ENCODE measurements at regions of chr14 and their contacts with region 1.

Region 1: GRCh38 chr14:24215495-24216344 is at the start of gene MDP1:
- DNase-seq: peak; percentile 66 to 74
- H3K4me3 ChIP-seq: peak within 1 kb of the TSS; percentile 73
- H3K27ac ChIP-seq: peak within 1 kb of the TSS; percentile 36; the same call in 1 of the 2 replicates
- H3K4me1 ChIP-seq: peaks cover 10% of the 10 kb centered on the region; the same call in 1 of the 2 replicates
- H3K27me3 ChIP-seq: no peaks in the 10 kb centered on the region
- CTCF ChIP-seq: no peak
- total RNA-seq, gene MDP1: 8.7 and 15.3 TPM in 2 replicates

Region 2: DNA sequence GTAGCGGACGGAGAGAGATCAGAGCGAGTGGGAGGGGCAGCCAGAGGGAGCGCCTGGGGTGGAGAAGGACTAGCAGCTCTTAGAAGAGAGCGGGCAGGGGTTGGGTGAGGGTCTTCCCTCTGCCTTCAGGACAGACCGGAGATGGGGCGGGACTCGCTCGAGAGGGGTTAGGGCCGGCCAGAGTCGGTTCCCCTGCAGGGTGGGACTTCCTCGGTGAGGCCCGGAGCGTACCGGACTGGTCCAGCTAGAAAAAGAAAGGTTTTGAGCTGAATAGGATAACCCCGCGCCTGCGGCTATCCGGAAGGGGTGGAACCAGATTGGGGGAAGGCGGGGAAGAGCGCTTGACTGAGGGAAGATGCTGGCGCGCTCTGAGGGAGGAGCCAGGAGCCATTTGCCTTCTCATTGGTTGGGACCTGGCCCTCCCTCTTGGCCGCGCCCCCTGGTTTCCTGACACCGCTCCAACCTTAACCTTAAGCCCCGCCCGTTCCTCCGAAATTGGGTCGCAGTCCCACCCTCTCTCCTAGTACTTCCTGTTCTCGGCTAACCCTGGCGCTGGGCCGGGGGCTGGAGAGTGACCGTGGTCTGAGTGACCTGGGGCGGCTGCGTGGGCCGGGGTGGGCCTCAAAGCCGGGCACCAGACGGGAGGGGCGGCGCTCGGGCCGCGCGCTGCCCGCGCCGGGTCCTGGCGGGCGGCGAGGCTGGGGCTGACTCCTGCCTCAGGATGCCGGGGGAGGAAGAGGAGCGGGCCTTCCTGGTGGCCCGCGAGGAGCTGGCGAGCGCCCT is 68.6 kb before region 1 on chr14 and contains the start of gene RNF31:
- CTCF ChIA-PET with region 1: no interaction called
- POLR2A ChIA-PET with region 1: no interaction called
- intact Hi-C with region 1: loop called (anchors 2 kb)
- DNase-seq: peak; percentile 90 to 94
- H3K4me3 ChIP-seq: peak within 1 kb of the TSS; percentile 63
- H3K27ac ChIP-seq: peak within 1 kb of the TSS; percentile 29; the same call in 1 of the 2 replicates
- H3K4me1 ChIP-seq: peaks cover 15% of the 10 kb centered on the region
- H3K27me3 ChIP-seq: no peaks in the 10 kb centered on the region
- CTCF ChIP-seq: no peak
- total RNA-seq, gene RNF31: 44.6 and 60.8 TPM in 2 replicates

Region 3: GRCh38 chr14:24195191-24196070 is 20.3 kb before region 1 on chr14 and contains the start of gene TM9SF1:
- CTCF ChIA-PET with region 1: no interaction called
- POLR2A ChIA-PET with region 1: interaction called, 10 read pairs
- intact Hi-C with region 1: loop called (anchors 2 kb)
- DNase-seq: peak; percentile 49 to 72
- H3K4me3 ChIP-seq: peak within 1 kb of the TSS; percentile 71
- H3K27ac ChIP-seq: peak within 1 kb of the TSS; percentile 80
- H3K4me1 ChIP-seq: 0 out of 2 replicates have a peak, but pooled peaks cover 7% of the 10 kb centered on the region
- H3K27me3 ChIP-seq: no peaks in the 10 kb centered on the region
- CTCF ChIP-seq: no peak
- total RNA-seq, gene TM9SF1: 37.3 and 41.2 TPM in 2 replicates

Region 4: GRCh38 chr14:24299255-24300195 is 83.8 kb after region 1 on chr14 and contains the starts of genes DHRS1 and NOP9:
- CTCF ChIA-PET with region 1: interaction called, 10 read pairs
- POLR2A ChIA-PET with region 1: interaction called, 3 read pairs
- intact Hi-C with region 1: no loop called
- DNase-seq: peak; percentile 68 to 86
- H3K4me3 ChIP-seq: peak within 1 kb of the TSS; percentile 88
- H3K27ac ChIP-seq: peak within 1 kb of the TSS; percentile 53
- H3K4me1 ChIP-seq: peaks cover 16% of the 10 kb centered on the region
- H3K27me3 ChIP-seq: no peaks in the 10 kb centered on the region
- CTCF ChIP-seq: no peak
- total RNA-seq, gene DHRS1: 37.9 and 41.4 TPM in 2 replicates
- total RNA-seq, gene NOP9: 24.4 and 31.1 TPM in 2 replicates

Region 5: DNA sequence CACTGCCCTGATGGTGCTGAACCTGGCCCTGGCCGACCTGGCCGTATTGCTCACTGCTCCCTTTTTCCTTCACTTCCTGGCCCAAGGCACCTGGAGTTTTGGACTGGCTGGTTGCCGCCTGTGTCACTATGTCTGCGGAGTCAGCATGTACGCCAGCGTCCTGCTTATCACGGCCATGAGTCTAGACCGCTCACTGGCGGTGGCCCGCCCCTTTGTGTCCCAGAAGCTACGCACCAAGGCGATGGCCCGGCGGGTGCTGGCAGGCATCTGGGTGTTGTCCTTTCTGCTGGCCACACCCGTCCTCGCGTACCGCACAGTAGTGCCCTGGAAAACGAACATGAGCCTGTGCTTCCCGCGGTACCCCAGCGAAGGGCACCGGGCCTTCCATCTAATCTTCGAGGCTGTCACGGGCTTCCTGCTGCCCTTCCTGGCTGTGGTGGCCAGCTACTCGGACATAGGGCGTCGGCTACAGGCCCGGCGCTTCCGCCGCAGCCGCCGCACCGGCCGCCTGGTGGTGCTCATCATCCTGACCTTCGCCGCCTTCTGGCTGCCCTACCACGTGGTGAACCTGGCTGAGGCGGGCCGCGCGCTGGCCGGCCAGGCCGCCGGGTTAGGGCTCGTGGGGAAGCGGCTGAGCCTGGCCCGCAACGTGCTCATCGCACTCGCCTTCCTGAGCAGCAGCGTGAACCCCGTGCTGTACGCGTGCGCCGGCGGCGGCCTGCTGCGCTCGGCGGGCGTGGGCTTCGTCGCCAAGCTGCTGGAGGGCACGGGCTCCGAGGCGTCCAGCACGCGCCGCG is 100.3 kb after region 1 on chr14:
- CTCF ChIA-PET with region 1: no interaction called
- POLR2A ChIA-PET with region 1: no interaction called
- intact Hi-C with region 1: no loop called
- DNase-seq: no peak
- H3K4me3 ChIP-seq: no peak overlapping the region
- H3K27ac ChIP-seq: no peak overlapping the region
- H3K4me1 ChIP-seq: no peaks in the 10 kb centered on the region
- H3K27me3 ChIP-seq: no peaks in the 10 kb centered on the region
- CTCF ChIP-seq: no peak

Measured in PC-9 (cell line).